ENCODE measurements at regions of chr10 and their contacts with region 1.

Region 1: GRCh38 chr10:30529373-30529998 is 95.5 kb downstream of the MAP3K8 start:
- DNase-seq: peak; percentile 58 to 86 (median 80)
- ATAC-seq: peak; percentile 90
- H3K4me3 ChIP-seq: peak overlapping the region; percentile 64
- H3K4me3 Mint-ChIP-seq: peak overlapping the region; percentile 84 to 96 (median 91)
- H3K27ac ChIP-seq: peak overlapping the region; percentile 82
- H3K27ac Mint-ChIP-seq: peak overlapping the region; percentile 96 to 99 (median 98)
- H3K4me1 ChIP-seq: peaks cover 40 to 65% of the 10 kb centered on the region in 2 donors
- H3K4me1 Mint-ChIP-seq: peaks cover 21 to 73% (median 55%) of the 10 kb centered on the region in 7 donors
- H3K27me3 ChIP-seq: no peaks in the 10 kb centered on the region
- H3K27me3 Mint-ChIP-seq: no peaks in the 10 kb centered on the region

Region 2: DNA sequence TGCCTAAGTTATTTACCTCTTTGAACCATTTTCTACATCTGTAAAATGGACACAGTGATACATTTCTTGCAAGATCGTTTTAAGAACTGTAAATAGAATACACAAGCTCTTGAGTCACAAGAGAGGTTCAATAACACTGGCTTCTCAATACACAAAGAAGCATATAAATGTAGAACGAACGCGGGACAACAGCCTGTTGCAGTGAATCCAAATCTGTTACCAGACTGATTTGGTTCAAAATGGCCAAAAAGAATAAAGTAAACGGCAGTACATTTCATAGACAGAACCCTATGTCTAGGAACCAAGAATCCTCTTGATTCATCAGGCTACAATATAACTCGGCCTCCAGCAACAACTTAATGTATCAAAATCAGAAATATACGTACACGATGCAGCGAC is 181.1 kb before region 1 on chr10:
- CTCF ChIA-PET with region 1: no interaction called
- POLR2A ChIA-PET with region 1: interaction called, 4 read pairs
- intact Hi-C with region 1: loop called (anchors 1 to 5 kb)
- DNase-seq: no peak
- ATAC-seq: no peak
- H3K4me3 ChIP-seq: peak overlapping the region; percentile 86
- H3K4me3 Mint-ChIP-seq: peak overlapping the region; percentile 92 to 99 (median 97)
- H3K27ac ChIP-seq: peak overlapping the region; percentile 84
- H3K27ac Mint-ChIP-seq: peak overlapping the region; percentile 87 to 98 (median 92)
- H3K4me1 ChIP-seq: peaks cover 11 to 18% of the 10 kb centered on the region in 2 donors
- H3K4me1 Mint-ChIP-seq: peaks cover 40 to 63% (median 55%) of the 10 kb centered on the region in 7 donors
- H3K27me3 ChIP-seq: no peaks in the 10 kb centered on the region
- H3K27me3 Mint-ChIP-seq: peaks cover 0 to 5% (median 0%) of the 10 kb centered on the region in 5 donors

Region 3: GRCh38 chr10:30383356-30383755 is 146.1 kb before region 1 on chr10:
- CTCF ChIA-PET with region 1: no interaction called
- POLR2A ChIA-PET with region 1: no interaction called
- intact Hi-C with region 1: no loop called
- DNase-seq: no peak
- ATAC-seq: no peak
- H3K4me3 ChIP-seq: no peak overlapping the region
- H3K4me3 Mint-ChIP-seq: no peak overlapping the region
- H3K27ac ChIP-seq: no peak overlapping the region
- H3K27ac Mint-ChIP-seq: no peak overlapping the region
- H3K4me1 ChIP-seq: no peaks in the 10 kb centered on the region
- H3K4me1 Mint-ChIP-seq: peaks cover 0 to 2% (median 0%) of the 10 kb centered on the region in 7 donors
- H3K27me3 ChIP-seq: no peaks in the 10 kb centered on the region
- H3K27me3 Mint-ChIP-seq: peaks cover 0 to 51% (median 3%) of the 10 kb centered on the region in 5 donors

Region 4: GRCh38 chr10:30413996-30414576 is 115.4 kb before region 1 on chr10:
- CTCF ChIA-PET with region 1: interaction called, 8 read pairs
- POLR2A ChIA-PET with region 1: interaction called, 6 read pairs
- intact Hi-C with region 1: loop called (anchors 1 kb)
- DNase-seq: peak in 4 of 9 donors; percentile 26 to 52 (median 33)
- ATAC-seq: peak; percentile 81
- H3K4me3 ChIP-seq: no peak overlapping the region
- H3K4me3 Mint-ChIP-seq: no peak overlapping the region
- H3K27ac ChIP-seq: no peak overlapping the region
- H3K27ac Mint-ChIP-seq: peak overlapping the region in 1 of 9 donors; percentile 38
- H3K4me1 ChIP-seq: peaks cover 9 to 12% of the 10 kb centered on the region in 2 donors
- H3K4me1 Mint-ChIP-seq: peaks cover 8 to 31% (median 14%) of the 10 kb centered on the region in 7 donors
- H3K27me3 ChIP-seq: no peaks in the 10 kb centered on the region
- H3K27me3 Mint-ChIP-seq: peaks cover 0 to 3% (median 0%) of the 10 kb centered on the region in 5 donors

Region 5: GRCh38 chr10:30456266-30456665 is 73.2 kb before region 1 on chr10:
- CTCF ChIA-PET with region 1: no interaction called
- POLR2A ChIA-PET with region 1: interaction called, 14 read pairs
- intact Hi-C with region 1: no loop called
- DNase-seq: peak in 5 of 9 donors; percentile 11 to 22 (median 16)
- ATAC-seq: peak; percentile 74
- H3K4me3 ChIP-seq: peak overlapping the region; percentile 17
- H3K4me3 Mint-ChIP-seq: peak overlapping the region; percentile 58 to 78 (median 72)
- H3K27ac ChIP-seq: no peak overlapping the region
- H3K27ac Mint-ChIP-seq: peak overlapping the region; percentile 11 to 85 (median 53)
- H3K4me1 ChIP-seq: peaks cover 18 to 26% of the 10 kb centered on the region in 2 donors
- H3K4me1 Mint-ChIP-seq: peaks cover 17 to 35% (median 20%) of the 10 kb centered on the region in 7 donors
- H3K27me3 ChIP-seq: no peaks in the 10 kb centered on the region
- H3K27me3 Mint-ChIP-seq: no peaks in the 10 kb centered on the region

Region 6: GRCh38 chr10:30502266-30503060 is 27.0 kb before region 1 on chr10:
- CTCF ChIA-PET with region 1: interaction called, 3 read pairs
- POLR2A ChIA-PET with region 1: interaction called, 3 read pairs
- intact Hi-C with region 1: loop called in 1 of 2 experiments (anchors 1 kb)
- DNase-seq: peak in 1 of 9 donors; percentile 38
- ATAC-seq: peak; percentile 87
- H3K4me3 ChIP-seq: no peak overlapping the region
- H3K4me3 Mint-ChIP-seq: peak overlapping the region in 4 of 10 donors; percentile 25 to 56 (median 36)
- H3K27ac ChIP-seq: no peak overlapping the region
- H3K27ac Mint-ChIP-seq: peak overlapping the region in 3 of 9 donors; percentile 8 to 74 (median 37)
- H3K4me1 ChIP-seq: peaks cover 21 to 48% of the 10 kb centered on the region in 2 donors
- H3K4me1 Mint-ChIP-seq: peaks cover 24 to 85% (median 29%) of the 10 kb centered on the region in 7 donors
- H3K27me3 ChIP-seq: no peaks in the 10 kb centered on the region
- H3K27me3 Mint-ChIP-seq: peaks cover 0 to 9% (median 0%) of the 10 kb centered on the region in 5 donors

Measured in naive thymus-derived CD4-positive, alpha-beta T cell (primary cell).